ENCODE measurements at regions of chr12 and their contacts with region 1.

Region 1: GRCh38 chr12:54431911-54432814 is 13.1 kb upstream of the ITGA5 start:
- DNase-seq: no peak
- H3K4me3 ChIP-seq: no peak overlapping the region
- H3K4me3 Mint-ChIP-seq: peak overlapping the region in 6 of 7 donors; percentile 23 to 84 (median 62)
- H3K27ac ChIP-seq: peak overlapping the region; percentile 28
- H3K27ac Mint-ChIP-seq: peak overlapping the region in 7 of 8 donors; percentile 29 to 83 (median 68)
- H3K4me1 ChIP-seq: peaks cover 37% of the 10 kb centered on the region
- H3K4me1 Mint-ChIP-seq: peaks cover 42 to 50% (median 43%) of the 10 kb centered on the region in 3 donors
- H3K27me3 ChIP-seq: no peaks in the 10 kb centered on the region
- H3K27me3 Mint-ChIP-seq: peaks cover 1 to 7% of the 10 kb centered on the region in 2 donors

Region 2: DNA sequence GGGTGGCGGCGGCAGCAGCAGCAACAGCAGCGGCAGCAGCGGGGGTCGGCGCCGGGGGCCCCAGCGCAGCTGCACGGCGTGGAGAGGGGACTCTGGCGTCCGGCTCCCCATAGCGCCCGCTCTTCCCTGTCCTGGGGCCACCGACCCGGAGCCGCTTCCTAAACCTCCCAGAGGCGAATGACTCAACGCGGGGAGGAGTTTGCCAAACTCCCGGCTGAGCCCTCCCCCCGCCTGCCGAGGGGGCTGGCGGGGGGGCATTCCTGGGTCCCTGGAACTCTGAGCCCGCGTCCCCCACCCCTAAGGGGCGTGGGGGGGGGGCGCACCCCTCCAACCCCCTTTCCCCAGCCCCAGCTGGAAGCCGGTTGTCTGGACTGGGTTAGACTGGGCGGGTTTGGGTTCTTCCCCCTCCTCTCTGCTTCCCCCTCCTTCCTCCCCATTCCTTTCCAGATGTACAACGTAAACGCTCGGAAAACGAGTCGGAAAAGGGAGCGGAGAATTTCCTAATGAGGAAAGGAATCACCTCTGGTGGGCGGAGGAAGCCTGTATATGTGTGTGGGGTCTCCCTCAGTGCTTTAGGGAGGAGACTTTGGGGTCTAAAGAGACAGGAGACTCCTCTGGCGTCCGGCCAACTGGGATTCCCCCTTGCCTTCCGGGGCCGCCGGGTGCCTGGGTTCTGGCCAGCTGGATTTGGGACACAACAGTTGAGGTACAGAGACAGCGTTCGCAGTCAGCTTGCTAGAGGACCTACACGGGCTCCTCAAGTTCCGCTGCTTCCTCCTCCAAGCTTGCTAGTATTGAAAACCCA is 12.9 kb before region 1 on chr12 and contains the start of gene ITGA5:
- CTCF ChIA-PET with region 1: interaction called, 39 read pairs
- POLR2A ChIA-PET with region 1: interaction called, 4 read pairs
- DNase-seq: peak in 4 of 5 donors; percentile 41 to 66 (median 52)
- H3K4me3 ChIP-seq: peak within 1 kb of the TSS; percentile 89
- H3K4me3 Mint-ChIP-seq: peak within 1 kb of the TSS; percentile 71 to 99 (median 94)
- H3K27ac ChIP-seq: peak within 1 kb of the TSS; percentile 91
- H3K27ac Mint-ChIP-seq: peak within 1 kb of the TSS; percentile 93 to 100 (median 96)
- H3K4me1 ChIP-seq: peaks cover 52% of the 10 kb centered on the region
- H3K4me1 Mint-ChIP-seq: peaks cover 48 to 65% (median 57%) of the 10 kb centered on the region in 3 donors
- H3K27me3 ChIP-seq: no peaks in the 10 kb centered on the region
- H3K27me3 Mint-ChIP-seq: peaks cover 0 to 13% of the 10 kb centered on the region in 2 donors
- total RNA-seq, gene ITGA5: 23.2 to 25.7 TPM

Region 3: GRCh38 chr12:54704202-54704601 is 272.0 kb after region 1 on chr12:
- CTCF ChIA-PET with region 1: no interaction called
- POLR2A ChIA-PET with region 1: no interaction called
- DNase-seq: no peak
- H3K4me3 ChIP-seq: no peak overlapping the region
- H3K4me3 Mint-ChIP-seq: no peak overlapping the region
- H3K27ac ChIP-seq: no peak overlapping the region
- H3K27ac Mint-ChIP-seq: peak overlapping the region in 1 of 8 donors; percentile 15
- H3K4me1 ChIP-seq: no peaks in the 10 kb centered on the region
- H3K4me1 Mint-ChIP-seq: no peaks in the 10 kb centered on the region
- H3K27me3 ChIP-seq: no peaks in the 10 kb centered on the region
- H3K27me3 Mint-ChIP-seq: peaks cover 0 to 11% of the 10 kb centered on the region in 2 donors

Measured in CD8-positive, alpha-beta memory T cell (primary cell).